ENCODE measurements at regions of chr3 and their contacts with region 1.

Region 1: GRCh38 chr3:149393345-149394160 is 16.1 kb upstream of the TM4SF1 start:
- DNase-seq: peak; percentile 37 to 64
- H3K4me3 ChIP-seq: no peak overlapping the region
- H3K27ac ChIP-seq: no peak overlapping the region
- H3K4me1 ChIP-seq: peaks cover 70% of the 10 kb centered on the region
- H3K27me3 ChIP-seq: no peaks in the 10 kb centered on the region
- CTCF ChIP-seq: peak; percentile 71

Region 2: GRCh38 chr3:149448331-149448831 is 54.8 kb after region 1 on chr3:
- CTCF ChIA-PET with region 1: no interaction called
- POLR2A ChIA-PET with region 1: no interaction called
- intact Hi-C with region 1: loop called (anchors 2 kb)
- DNase-seq: peak; percentile 22 to 81
- H3K4me3 ChIP-seq: no peak overlapping the region
- H3K27ac ChIP-seq: peak overlapping the region; percentile 81
- H3K4me1 ChIP-seq: peaks cover 36% of the 10 kb centered on the region
- H3K27me3 ChIP-seq: no peaks in the 10 kb centered on the region
- CTCF ChIP-seq: no peak

Region 3: GRCh38 chr3:149480325-149481017 is 86.9 kb after region 1 on chr3:
- CTCF ChIA-PET with region 1: interaction called, 3 read pairs
- POLR2A ChIA-PET with region 1: no interaction called
- intact Hi-C with region 1: loop called (anchors 1 kb)
- DNase-seq: peak; percentile 81 to 89
- H3K4me3 ChIP-seq: no peak overlapping the region
- H3K27ac ChIP-seq: peak overlapping the region; percentile 46
- H3K4me1 ChIP-seq: peaks cover 19% of the 10 kb centered on the region
- H3K27me3 ChIP-seq: no peaks in the 10 kb centered on the region
- CTCF ChIP-seq: peak; percentile 87

Region 4: DNA sequence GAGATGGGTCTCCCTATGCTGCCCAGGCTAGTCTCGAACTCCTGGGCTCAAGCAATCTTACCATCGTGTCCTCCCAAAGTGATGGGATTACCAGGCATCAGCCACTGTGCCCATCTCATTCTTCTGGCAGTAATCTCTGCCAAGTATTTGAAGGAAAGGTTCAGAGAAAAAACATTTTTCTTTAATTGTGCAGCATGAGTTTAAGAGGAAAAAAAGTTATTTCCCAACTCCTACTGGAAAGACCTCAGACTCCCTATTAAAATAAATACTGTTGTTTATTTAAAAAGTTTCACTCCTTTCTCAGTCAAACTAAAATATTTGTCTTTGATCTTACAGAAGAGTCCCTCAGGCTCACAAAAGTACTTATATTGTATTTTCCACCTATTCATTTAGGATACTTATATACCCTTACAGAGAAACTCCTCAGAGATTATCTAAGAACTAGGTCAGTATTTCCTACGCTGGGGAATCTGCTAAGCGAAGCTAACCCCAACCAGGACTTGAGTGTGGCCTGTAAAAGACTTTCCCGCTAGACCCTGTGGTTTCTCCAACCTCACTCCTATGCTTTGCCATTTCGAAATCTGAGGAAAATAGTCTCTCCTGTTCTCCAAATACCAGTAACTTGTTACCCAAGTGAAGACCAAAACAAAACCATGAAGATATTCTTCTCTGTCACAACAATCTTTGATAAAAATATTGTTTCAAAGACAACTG is 235.6 kb after region 1 on chr3:
- CTCF ChIA-PET with region 1: no interaction called
- POLR2A ChIA-PET with region 1: no interaction called
- intact Hi-C with region 1: no loop called
- DNase-seq: no peak
- H3K4me3 ChIP-seq: no peak overlapping the region
- H3K27ac ChIP-seq: no peak overlapping the region
- H3K4me1 ChIP-seq: no peaks in the 10 kb centered on the region; the same call in 1 of the 2 replicates
- H3K27me3 ChIP-seq: no peaks in the 10 kb centered on the region
- CTCF ChIP-seq: no peak